IMR-90 (cell line): ENCODE measurements at regions of chr9 and their contacts with region 1.

Region 1: DNA sequence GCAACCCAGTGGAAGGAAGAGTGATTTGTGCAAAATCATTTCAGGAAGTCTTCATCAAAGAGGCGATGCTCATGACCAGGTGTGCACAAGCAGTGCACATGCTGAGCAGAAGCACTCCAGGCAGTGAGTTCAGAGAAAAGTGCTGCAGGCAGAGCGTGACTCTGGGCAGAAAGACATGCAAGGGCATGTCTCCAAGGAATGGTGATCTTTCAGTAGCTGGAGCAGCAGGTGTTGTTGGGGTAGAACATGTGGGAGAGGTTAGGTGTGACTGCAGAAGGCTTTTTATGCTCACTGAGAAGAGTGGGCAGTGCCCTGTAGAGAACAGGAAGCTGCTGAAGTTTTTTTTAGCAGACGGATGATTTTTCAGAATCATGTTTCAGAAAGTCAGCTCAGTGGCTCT is 545.4 kb upstream of the TLE4 start:
- DNase-seq: no peak
- ATAC-seq: no peak
- H3K4me3 ChIP-seq: no peak overlapping the region
- H3K27ac ChIP-seq: no peak overlapping the region
- H3K4me1 ChIP-seq: peaks cover 17% of the 10 kb centered on the region
- H3K27me3 ChIP-seq: no peaks in the 10 kb centered on the region
- CTCF ChIP-seq: no peak
- POLR2A ChIP-seq: no peak
- RAD21 ChIP-seq: no peak

Region 2: GRCh38 chr9:78866207-78867132 is 159.8 kb before region 1 on chr9:
- CTCF ChIA-PET with region 1: no interaction called
- POLR2A ChIA-PET with region 1: no interaction called
- dilution Hi-C with region 1: no loop called
- in situ Hi-C with region 1: no loop called
- intact Hi-C with region 1: loop called (anchors 5 kb)
- DNase-seq: peak; percentile 96
- ATAC-seq: peak; percentile 85
- H3K4me3 ChIP-seq: no peak overlapping the region
- H3K27ac ChIP-seq: peak overlapping the region; percentile 27
- H3K4me1 ChIP-seq: peaks cover 7% of the 10 kb centered on the region
- H3K27me3 ChIP-seq: no peaks in the 10 kb centered on the region
- CTCF ChIP-seq: no peak
- POLR2A ChIP-seq: no peak
- RAD21 ChIP-seq: no peak

Region 3: DNA sequence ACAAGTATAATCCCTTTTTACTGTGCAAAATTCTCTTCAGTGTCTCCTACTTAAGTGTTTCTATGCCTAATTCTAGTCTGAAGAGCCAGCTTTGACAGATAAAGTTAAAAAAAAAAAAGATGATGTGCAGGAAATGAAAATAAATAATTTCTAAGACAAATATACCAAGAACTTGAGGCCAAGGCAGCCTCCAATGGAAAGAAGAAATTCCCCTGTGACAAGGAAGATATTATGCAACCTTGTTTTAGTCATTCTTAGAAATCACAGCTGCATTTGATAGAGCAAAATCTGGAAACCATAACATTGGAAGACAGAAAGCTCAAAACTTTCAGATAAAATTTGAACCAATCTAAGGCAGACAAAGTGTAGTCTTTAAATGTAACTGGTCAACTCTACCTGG is 169.6 kb after region 1 on chr9:
- CTCF ChIA-PET with region 1: no interaction called
- POLR2A ChIA-PET with region 1: no interaction called
- dilution Hi-C with region 1: no loop called
- in situ Hi-C with region 1: no loop called
- intact Hi-C with region 1: loop called (anchors 10 kb)
- DNase-seq: peak; percentile 96
- ATAC-seq: peak; percentile 45
- H3K4me3 ChIP-seq: no peak overlapping the region
- H3K27ac ChIP-seq: no peak overlapping the region
- H3K4me1 ChIP-seq: peaks cover 11% of the 10 kb centered on the region
- H3K27me3 ChIP-seq: no peaks in the 10 kb centered on the region
- CTCF ChIP-seq: no peak
- POLR2A ChIP-seq: no peak
- RAD21 ChIP-seq: no peak